ENCODE measurements at regions of chr19 and their contacts with region 1.

Region 1: GRCh38 chr19:2944775-2945574 is at the start of gene ZNF77:
- DNase-seq: peak; percentile 97 to 99 (median 99)
- ATAC-seq: peak; percentile 98 to 100 (median 99)
- H3K4me3 ChIP-seq: peak within 1 kb of the TSS; percentile 38 to 99 (median 80)
- H3K27ac ChIP-seq: peak within 1 kb of the TSS; percentile 33 to 97 (median 90)
- H3K4me1 ChIP-seq: peaks cover 0 to 29% (median 20%) of the 10 kb centered on the region in 12 donors
- H3K27me3 ChIP-seq: no peaks in the 10 kb centered on the region
- CTCF ChIP-seq: no peak
- POLR2A ChIP-seq: peak in 1 of 2 donors; percentile 19
- total RNA-seq, gene ZNF77: 1.8 to 3.2 (median 2.3) TPM

Region 2: GRCh38 chr19:2759362-2759761 is 185.6 kb before region 1 on chr19:
- intact Hi-C with region 1: no loop called
- DNase-seq: no peak
- ATAC-seq: no peak
- H3K4me3 ChIP-seq: no peak overlapping the region
- H3K27ac ChIP-seq: no peak overlapping the region
- H3K4me1 ChIP-seq: no peaks in the 10 kb centered on the region
- H3K27me3 ChIP-seq: no peaks in the 10 kb centered on the region
- CTCF ChIP-seq: no peak
- POLR2A ChIP-seq: no peak

Region 3: DNA sequence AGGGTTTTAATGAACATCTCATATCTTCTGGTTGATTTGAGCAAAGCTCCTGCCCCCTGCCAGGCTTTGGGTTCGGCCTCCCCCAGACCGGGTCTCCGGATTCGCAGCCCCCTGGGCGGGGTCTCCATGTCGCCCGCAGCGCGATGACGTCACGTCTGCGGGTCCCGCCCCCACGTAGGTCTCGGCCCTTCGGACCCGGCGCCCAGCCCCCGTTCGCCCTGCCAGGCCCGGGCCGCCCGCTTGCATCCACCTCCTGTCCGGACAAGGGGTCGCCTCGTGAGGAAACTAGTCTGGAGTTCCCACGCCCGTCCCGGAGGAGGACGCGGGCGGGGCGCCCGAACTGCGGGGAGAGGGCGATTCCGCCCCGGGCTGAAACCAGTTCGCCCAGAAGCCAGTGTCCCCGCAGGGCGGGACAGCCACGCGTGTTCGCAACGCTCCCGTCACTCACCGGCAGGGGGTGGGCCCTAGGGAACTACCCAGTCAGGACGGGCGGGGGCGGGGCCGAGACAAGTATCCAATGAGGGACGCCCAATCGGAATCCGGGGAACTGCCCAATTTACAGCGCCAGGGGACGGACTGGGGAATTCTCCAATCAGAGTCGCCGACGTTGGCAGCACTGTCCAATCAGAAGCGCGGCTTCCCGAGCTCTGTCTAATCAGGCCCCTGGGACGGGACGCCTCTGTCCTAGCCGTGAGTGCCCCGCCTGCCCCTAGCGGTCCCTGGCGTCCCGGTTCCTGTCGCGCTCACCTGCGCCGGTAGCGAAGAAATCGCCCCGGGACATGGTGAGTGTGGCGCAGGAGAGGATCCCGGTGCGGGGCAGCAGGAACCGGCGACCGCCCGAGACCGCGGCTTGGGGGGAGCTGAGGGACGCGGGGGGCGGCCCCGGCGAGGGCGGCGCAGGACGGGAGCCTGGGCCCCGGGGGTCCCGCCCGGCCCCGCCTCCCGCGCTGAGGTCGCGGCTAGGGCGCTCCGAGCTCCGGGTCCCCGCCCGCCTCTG is 103.9 kb before region 1 on chr19 and contains the start of gene ZNF555:
- intact Hi-C with region 1: loop called in 1 of 10 experiments (anchors 5 kb)
- DNase-seq: peak; percentile 99 to 100 (median 100)
- ATAC-seq: peak; percentile 98 to 99 (median 98)
- H3K4me3 ChIP-seq: peak within 1 kb of the TSS; percentile 60 to 97 (median 81)
- H3K27ac ChIP-seq: peak within 1 kb of the TSS; percentile 69 to 99 (median 94)
- H3K4me1 ChIP-seq: peaks cover 0 to 28% (median 11%) of the 10 kb centered on the region in 12 donors
- H3K27me3 ChIP-seq: no peaks in the 10 kb centered on the region
- CTCF ChIP-seq: peak; percentile 39 to 70 (median 56)
- POLR2A ChIP-seq: peak in 1 of 2 donors; percentile 62
- total RNA-seq, gene ZNF555: 5.9 to 11.5 (median 8.2) TPM

Region 4: GRCh38 chr19:2900296-2901252 is 44.4 kb before region 1 on chr19 and contains the start of gene ZNF57:
- intact Hi-C with region 1: loop called in 9 of 10 experiments (anchors 2 to 5 kb)
- DNase-seq: peak; percentile 100
- ATAC-seq: peak; percentile 99 to 100 (median 99)
- H3K4me3 ChIP-seq: peak within 1 kb of the TSS; percentile 40 to 86 (median 70)
- H3K27ac ChIP-seq: peak within 1 kb of the TSS in 11 of 12 donors; percentile 66 to 93 (median 80)
- H3K4me1 ChIP-seq: peaks cover 0 to 8% (median 3%) of the 10 kb centered on the region in 12 donors
- H3K27me3 ChIP-seq: no peaks in the 10 kb centered on the region
- CTCF ChIP-seq: no peak
- POLR2A ChIP-seq: peak in 1 of 2 donors; percentile 59
- total RNA-seq, gene ZNF57: 2.1 to 5.6 (median 3.3) TPM

Region 5: GRCh38 chr19:2983351-2984195 is 38.6 kb after region 1 on chr19:
- intact Hi-C with region 1: no loop called
- DNase-seq: peak; percentile 67 to 84 (median 83)
- ATAC-seq: peak; percentile 24 to 71 (median 59)
- H3K4me3 ChIP-seq: peak overlapping the region in 10 of 12 donors; percentile 34 to 55 (median 46)
- H3K27ac ChIP-seq: peak overlapping the region; percentile 41 to 88 (median 76)
- H3K4me1 ChIP-seq: peaks cover 3 to 27% (median 23%) of the 10 kb centered on the region in 12 donors
- H3K27me3 ChIP-seq: peaks cover 0 to 11% (median 0%) of the 10 kb centered on the region in 9 donors
- CTCF ChIP-seq: no peak
- POLR2A ChIP-seq: no peak